ENCODE measurements at regions of chr11 and their contacts with region 1.

Region 1: GRCh38 chr11:304915-305843 is 2.4 kb upstream of the IFITM2 start:
- DNase-seq: peak; percentile 88
- H3K4me3 Mint-ChIP-seq: no peak overlapping the region
- H3K27ac Mint-ChIP-seq: no peak overlapping the region
- H3K4me1 Mint-ChIP-seq: peaks cover 36% of the 10 kb centered on the region
- H3K27me3 Mint-ChIP-seq: peaks cover 9% of the 10 kb centered on the region

Region 2: GRCh38 chr11:207208-207862 is 97.8 kb before region 1 on chr11 and contains the starts of genes BET1L and RIC8A:
- intact Hi-C with region 1: no loop called
- DNase-seq: peak; percentile 99
- H3K4me3 Mint-ChIP-seq: peak within 1 kb of the TSS; percentile 98
- H3K27ac Mint-ChIP-seq: peak within 1 kb of the TSS; percentile 100
- H3K4me1 Mint-ChIP-seq: peaks cover 29% of the 10 kb centered on the region
- H3K27me3 Mint-ChIP-seq: no peaks in the 10 kb centered on the region
- total RNA-seq, gene BET1L: 43.6 and 46.9 TPM in 2 replicates
- total RNA-seq, gene RIC8A: 118 and 128 TPM in 2 replicates

Region 3: GRCh38 chr11:236774-237767 is 68.1 kb before region 1 on chr11 and contains the start of gene PSMD13:
- intact Hi-C with region 1: loop called (anchors 2 kb)
- DNase-seq: peak; percentile 97
- H3K4me3 Mint-ChIP-seq: peak within 1 kb of the TSS; percentile 97
- H3K27ac Mint-ChIP-seq: peak within 1 kb of the TSS; percentile 100
- H3K4me1 Mint-ChIP-seq: peaks cover 46% of the 10 kb centered on the region
- H3K27me3 Mint-ChIP-seq: no peaks in the 10 kb centered on the region
- total RNA-seq, gene PSMD13: 272 and 275 TPM in 2 replicates

Region 4: DNA sequence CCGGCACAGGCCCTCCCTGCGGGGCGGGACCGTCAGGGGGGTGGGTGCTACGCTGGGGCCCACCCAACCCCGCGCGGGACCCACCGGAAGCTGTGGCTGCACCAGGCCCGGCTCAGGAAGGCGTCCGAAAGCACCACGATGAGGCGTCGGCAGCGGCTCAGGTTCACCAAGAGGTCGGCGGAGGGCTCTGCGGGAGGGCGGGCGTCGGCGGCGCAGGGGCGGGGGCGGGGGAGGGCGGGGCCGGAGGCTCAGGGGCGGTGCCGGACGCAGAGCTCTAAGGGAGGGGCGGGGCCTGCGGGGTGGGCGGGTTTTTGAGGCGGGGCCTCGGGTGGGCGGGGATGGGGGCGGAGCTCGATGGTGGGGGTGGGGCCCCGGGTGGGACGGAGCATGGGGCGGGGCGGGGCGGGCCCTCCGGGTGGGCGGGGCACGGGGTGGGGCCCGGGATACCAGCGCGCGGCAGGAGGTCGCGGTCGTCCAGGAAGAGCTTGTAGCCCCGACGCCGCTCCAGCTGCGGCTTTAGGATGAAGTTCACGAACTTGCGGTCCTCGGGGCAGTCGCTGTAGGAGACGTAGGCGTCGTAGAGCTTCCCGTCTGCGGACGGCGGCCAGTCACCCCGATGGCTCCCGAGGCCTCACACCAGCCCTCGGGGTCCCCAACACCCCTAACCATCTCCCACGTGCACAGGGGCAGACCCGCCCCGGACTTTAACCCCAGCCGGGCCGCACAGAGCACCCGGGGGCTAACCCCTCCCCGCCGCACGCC is 102.0 kb after region 1 on chr11:
- intact Hi-C with region 1: loop called (anchors 5 kb)
- DNase-seq: peak; percentile 97
- H3K4me3 Mint-ChIP-seq: peak overlapping the region; percentile 62
- H3K27ac Mint-ChIP-seq: peak overlapping the region; percentile 60
- H3K4me1 Mint-ChIP-seq: peaks cover 2% of the 10 kb centered on the region
- H3K27me3 Mint-ChIP-seq: no peaks in the 10 kb centered on the region

Region 5: GRCh38 chr11:518463-519250 is 213.5 kb after region 1 on chr11:
- intact Hi-C with region 1: loop called (anchors 5 kb)
- DNase-seq: peak; percentile 96
- H3K4me3 Mint-ChIP-seq: peak overlapping the region; percentile 75
- H3K27ac Mint-ChIP-seq: peak overlapping the region; percentile 69
- H3K4me1 Mint-ChIP-seq: peaks cover 4% of the 10 kb centered on the region
- H3K27me3 Mint-ChIP-seq: no peaks in the 10 kb centered on the region

Measured in activated CD4-positive, alpha-beta T cell treated with anti-CD3 and anti-CD28 coated beads, Interleukin-2, amount 10 ng/mL, durations not matched to agents 24 days and 14 days (primary cell).